Heart left ventricle (tissue), 16 donors: ENCODE measurements at regions of chr2 and their contacts with region 1.

Region 1: GRCh38 chr2:210002158-210003157 is at the start of gene RPE:
- DNase-seq: peak; percentile 96 to 98 (median 97)
- ATAC-seq: peak; percentile 100
- H3K4me3 ChIP-seq: peak within 1 kb of the TSS; percentile 81 to 98 (median 92)
- H3K27ac ChIP-seq: peak within 1 kb of the TSS; percentile 35 to 93 (median 85)
- H3K4me1 ChIP-seq: peaks cover 8 to 50% (median 31%) of the 10 kb centered on the region in 12 donors
- H3K27me3 ChIP-seq: no peaks in the 10 kb centered on the region
- CTCF ChIP-seq: no peak
- POLR2A ChIP-seq: peak in 1 of 2 donors; percentile 56
- total RNA-seq, gene RPE: 10.7 to 29.8 (median 17.0) TPM

Region 2: DNA sequence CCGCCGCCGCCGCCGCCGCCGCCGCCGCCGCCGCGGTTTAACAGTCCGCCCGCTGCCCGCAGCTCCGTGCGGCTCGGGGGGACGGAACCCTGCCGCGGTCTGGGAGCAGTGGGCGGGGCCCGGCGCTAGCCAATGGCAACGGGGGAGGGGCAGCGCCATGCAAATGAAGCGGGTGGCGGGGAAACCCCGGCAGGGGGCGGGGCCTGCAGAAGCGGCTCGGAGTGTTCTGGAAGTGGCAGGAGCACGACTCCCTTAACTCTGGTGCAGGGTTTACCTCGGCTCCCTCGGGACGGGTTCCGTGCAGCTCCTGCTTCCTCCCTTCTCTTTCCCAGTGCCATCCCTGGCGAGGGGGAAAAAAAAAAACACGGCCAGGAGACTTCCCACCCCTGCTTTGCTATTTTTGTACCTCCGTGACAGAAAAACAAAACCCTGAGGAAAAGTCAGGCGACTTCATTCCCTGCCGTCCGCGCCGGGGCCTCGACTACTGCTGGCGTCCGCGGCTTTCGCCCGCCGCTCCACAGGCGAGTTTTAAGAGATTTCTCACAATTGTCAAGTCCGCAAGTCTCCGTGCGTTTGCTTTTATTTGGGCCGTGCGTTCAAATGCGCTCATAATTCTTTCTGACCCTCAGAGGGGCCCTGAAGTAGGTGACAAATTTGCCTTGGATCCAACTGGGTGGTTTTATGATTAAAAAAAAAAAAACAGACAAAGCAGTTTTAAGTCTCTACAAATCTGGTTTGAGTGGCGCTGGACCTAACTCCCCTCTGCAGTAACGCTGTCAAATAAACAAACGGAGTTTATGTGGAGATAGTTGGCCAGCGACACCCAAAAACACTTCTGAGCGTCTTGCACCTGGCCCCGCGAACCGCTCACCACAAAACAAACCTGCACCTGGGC is 169.1 kb after region 1 on chr2 and contains the start of gene KANSL1L:
- intact Hi-C with region 1: loop called in 8 of 10 experiments (anchors 1 to 5 kb)
- DNase-seq: peak; percentile 99 to 100 (median 99)
- ATAC-seq: peak; percentile 91 to 97 (median 94)
- H3K4me3 ChIP-seq: peak within 1 kb of the TSS; percentile 74 to 97 (median 90)
- H3K27ac ChIP-seq: peak within 1 kb of the TSS; percentile 97 to 100 (median 99)
- H3K4me1 ChIP-seq: peaks cover 3 to 41% (median 26%) of the 10 kb centered on the region in 12 donors
- H3K27me3 ChIP-seq: no peaks in the 10 kb centered on the region
- CTCF ChIP-seq: peak in 2 of 12 donors; percentile 4 to 9
- POLR2A ChIP-seq: peak; percentile 65 to 88
- total RNA-seq, gene KANSL1L: 12.0 to 24.9 (median 18.0) TPM

Region 3: DNA sequence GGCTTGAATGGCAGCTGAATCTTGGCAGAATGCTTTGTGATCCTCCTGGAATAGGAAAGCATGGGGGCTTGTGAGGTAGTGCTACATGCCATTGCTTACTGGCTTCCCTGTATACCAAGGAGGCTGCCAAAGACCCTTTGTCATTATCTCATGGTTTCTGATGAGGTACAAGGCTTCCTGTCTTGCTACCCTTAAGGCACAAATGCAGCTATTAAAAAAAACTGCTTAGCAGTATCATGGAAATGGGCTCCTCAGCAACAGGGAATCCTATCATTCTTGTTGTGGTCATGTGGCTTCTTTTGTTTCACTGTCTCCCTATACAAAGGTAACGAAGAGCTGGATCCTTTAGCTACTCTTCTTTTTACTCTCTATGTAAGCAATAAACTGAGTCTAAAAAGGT is 175.3 kb after region 1 on chr2:
- intact Hi-C with region 1: loop called in 6 of 10 experiments (anchors 2 to 5 kb)
- DNase-seq: no peak
- ATAC-seq: no peak
- H3K4me3 ChIP-seq: no peak overlapping the region
- H3K27ac ChIP-seq: no peak overlapping the region
- H3K4me1 ChIP-seq: peaks cover 0 to 1% (median 0%) of the 10 kb centered on the region in 12 donors
- H3K27me3 ChIP-seq: no peaks in the 10 kb centered on the region
- CTCF ChIP-seq: no peak
- POLR2A ChIP-seq: no peak